Gastrocnemius medialis (tissue), 4 donors: ENCODE measurements at regions of chr16 and their contacts with region 1.

Region 1: DNA sequence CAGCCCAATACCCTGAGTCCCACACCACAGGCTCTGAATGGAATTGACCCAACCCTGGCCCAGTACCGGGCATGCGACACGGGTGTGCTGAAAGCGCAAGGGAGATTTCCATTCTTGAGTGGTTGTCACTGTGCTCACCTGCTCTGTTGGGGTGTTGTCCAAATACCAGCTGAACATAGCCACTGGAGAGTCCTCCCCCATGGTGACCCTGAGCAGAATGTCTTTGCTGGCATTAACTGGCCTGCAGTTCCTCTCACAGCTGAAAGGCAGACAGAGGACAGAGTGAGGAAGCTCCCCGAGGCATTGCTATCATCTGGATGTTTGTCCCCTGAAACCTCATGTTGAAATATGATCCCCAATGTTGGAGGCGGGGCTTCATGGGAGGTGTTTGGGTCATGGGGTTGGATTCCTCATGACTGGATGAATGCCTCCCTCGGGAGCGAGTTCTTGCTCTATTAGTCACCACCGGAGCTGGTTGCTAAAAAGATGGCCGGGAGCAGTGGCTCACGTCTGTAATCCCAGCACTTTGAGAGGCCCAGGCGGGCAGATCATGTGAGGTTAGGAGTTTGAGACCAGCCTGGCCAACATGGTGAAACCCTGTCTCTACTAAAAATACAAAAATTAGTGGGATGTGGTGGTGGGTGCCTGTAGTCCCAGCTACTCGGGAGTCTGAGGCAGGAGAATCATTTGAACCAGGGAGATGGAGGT is 57.3 kb upstream of the BCO1 start:
- DNase-seq: peak; percentile 87 to 92
- ATAC-seq: peak; percentile 97
- H3K4me3 ChIP-seq: peak overlapping the region in 2 of 4 donors; percentile 12 to 36
- H3K27ac ChIP-seq: peak overlapping the region; percentile 75 to 94 (median 83)
- H3K4me1 ChIP-seq: peaks cover 6 to 9% of the 10 kb centered on the region in 2 donors
- H3K27me3 ChIP-seq: no peaks in the 10 kb centered on the region
- CTCF ChIP-seq: no peak
- POLR2A ChIP-seq: no peak

Region 2: DNA sequence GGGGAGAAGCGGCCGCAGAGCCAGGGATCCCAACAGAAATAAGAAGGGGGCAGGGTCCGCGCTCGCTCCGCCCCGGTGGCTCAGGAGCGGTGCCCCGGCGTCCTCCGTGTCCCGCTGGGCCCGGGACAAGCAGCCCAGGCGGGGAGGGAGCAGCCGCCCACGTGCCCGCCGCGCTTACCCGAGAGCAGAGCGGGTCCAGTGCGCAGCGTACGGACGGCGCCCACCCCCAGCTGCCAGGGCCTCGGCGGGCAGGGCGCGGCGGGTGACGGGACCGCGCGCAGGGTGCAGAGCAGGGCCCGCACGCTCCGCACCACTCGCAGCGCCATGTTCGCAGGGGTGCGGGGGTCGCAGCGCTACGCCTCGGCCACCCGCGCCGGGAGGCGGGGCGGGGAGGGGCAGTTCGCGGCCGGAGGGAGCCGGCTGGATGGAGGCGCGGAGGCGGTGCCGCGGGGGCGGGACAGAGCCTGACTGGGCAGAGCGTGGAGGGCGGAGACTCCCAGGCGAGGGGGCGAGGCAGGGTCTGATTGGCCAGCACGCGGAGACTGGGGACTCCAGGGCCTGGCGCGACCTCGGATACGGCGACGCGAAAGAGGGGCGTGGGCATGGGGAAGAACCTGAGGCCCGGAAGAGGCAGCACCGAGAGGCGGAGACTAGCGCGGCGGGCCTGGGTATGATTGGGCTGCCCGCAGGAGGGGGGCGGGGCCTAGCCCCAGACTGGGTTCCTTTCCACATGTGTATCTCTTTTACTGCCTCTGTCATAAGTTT is 85.0 kb before region 1 on chr16 and contains the start of gene GCSH:
- in situ Hi-C with region 1: no loop called
- intact Hi-C with region 1: loop called (anchors 1 kb)
- DNase-seq: peak; percentile 99
- ATAC-seq: peak; percentile 95
- H3K4me3 ChIP-seq: peak within 1 kb of the TSS; percentile 71 to 97 (median 86)
- H3K27ac ChIP-seq: peak within 1 kb of the TSS; percentile 80 to 93 (median 90)
- H3K4me1 ChIP-seq: peaks cover 5 to 7% of the 10 kb centered on the region in 2 donors
- H3K27me3 ChIP-seq: no peaks in the 10 kb centered on the region
- CTCF ChIP-seq: no peak
- POLR2A ChIP-seq: peak; percentile 58 to 67
- total RNA-seq, gene GCSH: 18.5 to 40.4 (median 30.9) TPM

Region 3: GRCh38 chr16:81238296-81239011 is 57.3 kb after region 1 on chr16 and contains the start of gene BCO1:
- in situ Hi-C with region 1: no loop called
- intact Hi-C with region 1: loop called (anchors 1 kb)
- DNase-seq: no peak
- ATAC-seq: peak; percentile 9 to 13
- H3K4me3 ChIP-seq: peak within 1 kb of the TSS; percentile 13 to 47 (median 25)
- H3K27ac ChIP-seq: peak within 1 kb of the TSS; percentile 71 to 83 (median 76)
- H3K4me1 ChIP-seq: peaks cover 10 to 13% of the 10 kb centered on the region in 2 donors
- H3K27me3 ChIP-seq: no peaks in the 10 kb centered on the region
- CTCF ChIP-seq: no peak
- POLR2A ChIP-seq: no peak
- total RNA-seq, gene BCO1: not detected

Region 4: DNA sequence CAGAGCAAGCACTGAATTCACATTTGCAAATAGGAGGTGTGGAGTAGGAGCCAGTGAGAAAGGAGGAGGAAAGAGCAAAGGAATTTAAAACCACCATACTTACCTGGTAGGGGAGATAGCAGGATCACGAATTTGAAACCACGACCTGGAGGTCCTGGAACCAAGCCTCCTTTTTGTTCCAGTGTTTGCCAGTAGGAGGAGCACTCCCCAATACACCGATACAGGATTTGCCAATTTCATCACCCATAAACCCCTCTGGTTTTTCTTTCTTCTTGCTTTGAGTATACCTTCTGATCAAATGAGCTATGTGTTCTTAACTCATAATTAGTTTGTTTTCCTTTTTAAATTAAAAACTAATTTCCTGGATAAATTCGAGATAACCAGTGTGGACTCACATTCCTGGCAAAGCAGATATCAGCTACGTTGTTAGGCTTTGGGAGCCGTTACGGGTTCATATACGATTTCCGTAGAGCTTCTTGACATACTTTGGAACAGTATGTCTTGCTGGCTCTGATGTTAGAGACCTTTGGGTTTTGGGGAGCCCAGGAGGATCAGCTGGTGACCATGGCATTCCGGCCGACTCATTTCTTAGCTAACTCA is 80.0 kb after region 1 on chr16:
- in situ Hi-C with region 1: no loop called
- intact Hi-C with region 1: no loop called
- DNase-seq: no peak
- ATAC-seq: no peak
- H3K4me3 ChIP-seq: no peak overlapping the region
- H3K27ac ChIP-seq: no peak overlapping the region
- H3K4me1 ChIP-seq: peaks cover 0 to 3% of the 10 kb centered on the region in 2 donors
- H3K27me3 ChIP-seq: no peaks in the 10 kb centered on the region
- CTCF ChIP-seq: peak in 3 of 5 experiments; percentile 13 to 35 (median 22)
- POLR2A ChIP-seq: no peak